ENCODE measurements at regions of chr11 and their contacts with region 1.

Region 1: DNA sequence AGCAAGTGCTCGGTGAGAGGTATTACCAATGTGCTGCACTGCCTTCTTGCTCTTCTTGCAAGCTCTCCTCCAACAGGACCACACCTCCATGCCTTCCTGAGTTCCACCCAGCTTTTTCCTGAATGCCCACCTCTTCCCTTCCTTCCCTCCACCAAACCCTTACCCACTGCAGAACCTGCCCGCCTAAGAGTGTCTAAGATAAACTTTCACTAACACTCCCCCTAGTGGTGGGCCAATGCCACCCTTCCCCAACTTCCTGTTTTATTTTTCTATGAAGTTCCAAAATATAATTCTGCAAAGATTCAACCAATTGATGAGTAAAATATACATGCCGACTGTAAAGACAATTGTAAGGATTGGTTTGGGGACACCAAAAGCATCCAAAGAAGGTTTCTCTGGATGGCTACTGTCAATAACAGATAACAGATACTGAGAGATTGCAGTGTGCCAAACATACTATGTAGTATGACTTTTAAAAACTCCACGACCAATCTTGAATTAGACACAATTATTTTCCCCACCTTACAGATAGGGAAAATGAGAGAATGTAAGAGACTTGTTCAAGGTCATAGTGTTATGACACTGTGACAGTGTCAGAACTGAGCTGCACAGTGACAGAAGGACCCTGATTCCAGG is 38.6 kb upstream of the BMAL1 start:
- DNase-seq: peak; percentile 70
- ATAC-seq: peak; percentile 87
- H3K4me3 Mint-ChIP-seq: no peak overlapping the region
- H3K27ac Mint-ChIP-seq: no peak overlapping the region
- H3K4me1 Mint-ChIP-seq: no peaks in the 10 kb centered on the region
- H3K27me3 Mint-ChIP-seq: peaks cover 25% of the 10 kb centered on the region

Region 2: DNA sequence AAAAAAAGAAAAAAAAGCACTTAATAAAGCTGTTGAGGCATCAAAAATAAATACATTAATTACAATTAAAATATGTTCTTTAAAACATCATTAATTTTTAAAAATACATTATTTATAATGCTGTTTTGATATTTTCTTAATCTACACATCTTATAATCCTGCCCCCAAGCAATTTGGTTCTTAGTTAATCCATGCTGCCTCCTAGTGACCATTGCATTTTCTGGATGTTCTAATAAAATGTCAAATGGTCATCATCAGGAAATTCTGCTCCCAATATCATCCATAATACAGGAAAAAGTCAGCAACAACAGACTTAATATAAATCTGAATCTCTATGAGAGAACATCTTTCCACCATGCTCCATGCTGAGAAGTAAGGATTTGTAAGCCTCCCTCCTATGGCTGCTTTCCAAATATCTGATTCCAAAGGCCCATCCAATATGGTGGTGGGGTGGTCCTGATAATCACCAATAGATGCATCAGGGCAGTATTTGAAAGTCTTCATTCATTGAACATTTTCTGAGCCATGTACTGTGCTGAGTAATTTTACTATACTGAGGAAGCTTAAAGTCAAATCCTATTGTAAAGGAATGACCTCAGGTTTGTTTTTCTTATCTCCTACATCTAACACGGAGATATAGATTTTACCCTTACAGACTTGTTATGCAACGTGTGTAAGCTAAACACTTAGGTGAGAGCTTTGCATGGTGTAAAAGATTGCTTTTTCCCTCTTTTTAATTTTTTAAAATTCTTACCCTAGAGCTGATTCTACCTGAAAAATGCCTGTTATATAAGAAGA is 86.1 kb before region 1 on chr11:
- CTCF ChIA-PET with region 1: no interaction called
- POLR2A ChIA-PET with region 1: no interaction called
- DNase-seq: no peak
- ATAC-seq: no peak
- H3K4me3 Mint-ChIP-seq: no peak overlapping the region
- H3K27ac Mint-ChIP-seq: no peak overlapping the region
- H3K4me1 Mint-ChIP-seq: no peaks in the 10 kb centered on the region
- H3K27me3 Mint-ChIP-seq: peaks cover 5% of the 10 kb centered on the region

Region 3: GRCh38 chr11:13225038-13226001 is 13.7 kb before region 1 on chr11:
- CTCF ChIA-PET with region 1: interaction called, 12 read pairs
- POLR2A ChIA-PET with region 1: no interaction called
- DNase-seq: no peak
- ATAC-seq: no peak
- H3K4me3 Mint-ChIP-seq: no peak overlapping the region
- H3K27ac Mint-ChIP-seq: no peak overlapping the region
- H3K4me1 Mint-ChIP-seq: peaks cover 3% of the 10 kb centered on the region
- H3K27me3 Mint-ChIP-seq: peaks cover 10% of the 10 kb centered on the region

Region 4: DNA sequence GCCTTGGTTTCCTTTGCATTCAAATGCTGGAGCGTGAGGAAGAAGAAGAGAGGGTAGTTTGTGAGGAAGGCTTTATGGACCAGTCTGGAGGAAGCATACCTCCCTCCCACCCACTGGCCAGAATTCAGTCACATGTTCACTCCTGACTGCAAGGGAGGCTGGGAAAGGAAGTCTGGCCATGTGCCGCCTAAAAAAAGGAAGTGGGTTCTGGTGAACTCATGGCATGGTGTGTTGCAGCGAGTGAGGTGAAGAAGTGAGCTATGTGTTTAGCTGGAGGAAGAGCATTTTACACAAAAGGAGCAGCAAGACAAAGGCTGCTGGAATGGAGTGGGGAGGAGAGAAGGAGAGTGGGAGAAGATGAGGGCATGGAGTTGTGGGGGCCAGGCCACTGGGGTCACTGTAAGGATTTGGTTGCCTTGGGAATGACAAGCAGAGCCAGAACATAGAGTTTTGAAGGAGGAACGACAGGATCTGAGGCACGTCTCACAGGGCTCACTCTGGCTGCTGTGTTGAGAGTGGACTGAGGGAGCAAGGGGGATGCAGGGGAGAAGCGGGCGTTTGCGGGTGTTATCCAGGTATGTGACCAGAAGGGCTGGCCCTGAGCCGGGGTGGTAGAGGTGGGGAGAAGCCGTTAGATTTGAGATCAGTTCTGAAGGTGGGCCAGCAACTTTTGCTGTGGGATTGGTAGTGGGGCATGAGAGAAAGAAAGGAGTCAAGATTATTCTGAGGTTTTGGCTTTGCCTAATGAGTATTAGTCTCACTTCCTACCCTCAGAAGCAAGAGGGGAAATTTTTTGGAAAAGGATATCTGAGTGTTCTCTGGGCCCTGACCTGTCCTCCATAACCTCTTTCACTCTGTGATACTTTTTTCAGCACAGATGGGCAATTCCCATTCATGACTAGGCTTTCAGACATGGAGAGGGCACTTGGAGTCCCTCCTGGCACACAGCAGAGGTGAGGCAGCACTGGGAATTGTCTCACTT is 65.0 kb after region 1 on chr11:
- CTCF ChIA-PET with region 1: no interaction called
- POLR2A ChIA-PET with region 1: no interaction called
- DNase-seq: peak; percentile 38
- ATAC-seq: peak; percentile 47
- H3K4me3 Mint-ChIP-seq: no peak overlapping the region
- H3K27ac Mint-ChIP-seq: peak overlapping the region; percentile 77
- H3K4me1 Mint-ChIP-seq: peaks cover 22% of the 10 kb centered on the region
- H3K27me3 Mint-ChIP-seq: no peaks in the 10 kb centered on the region